OCI-LY7 (cell line): ENCODE measurements at regions of chr3 and their contacts with region 1.

Region 1: DNA sequence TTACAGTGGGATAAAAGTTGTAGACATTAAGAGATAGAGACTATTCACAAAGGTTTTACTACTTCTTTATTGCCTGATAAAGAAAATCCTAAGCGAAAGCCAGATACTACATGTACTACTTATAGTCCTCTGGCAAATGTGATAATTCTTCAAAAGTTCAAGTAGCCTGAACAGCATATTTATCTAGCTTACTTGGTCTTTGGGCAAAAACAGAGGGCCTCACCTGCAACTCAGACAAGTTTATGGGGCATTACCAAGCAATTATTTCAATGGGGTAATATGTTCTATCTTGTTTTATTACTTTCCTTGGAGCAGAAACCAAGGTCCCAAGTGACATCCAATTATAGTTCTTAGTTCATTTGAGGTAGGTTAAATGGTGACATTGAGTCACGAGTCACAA is 390.1 kb upstream of the ARHGEF26 start:
- DNase-seq: no peak
- H3K4me3 ChIP-seq: no peak overlapping the region
- H3K27ac ChIP-seq: no peak overlapping the region
- H3K4me1 ChIP-seq: no peaks in the 10 kb centered on the region
- CTCF ChIP-seq: no peak

Region 2: GRCh38 chr3:153130312-153130990 is 600.6 kb before region 1 on chr3:
- CTCF ChIA-PET with region 1: no interaction called
- POLR2A ChIA-PET with region 1: no interaction called
- intact Hi-C with region 1: no loop called
- DNase-seq: no peak
- H3K4me3 ChIP-seq: no peak overlapping the region
- H3K27ac ChIP-seq: no peak overlapping the region
- H3K4me1 ChIP-seq: no peaks in the 10 kb centered on the region
- CTCF ChIP-seq: no peak

Region 3: GRCh38 chr3:153495422-153495821 is 235.6 kb before region 1 on chr3:
- CTCF ChIA-PET with region 1: no interaction called
- POLR2A ChIA-PET with region 1: no interaction called
- intact Hi-C with region 1: no loop called
- DNase-seq: no peak
- H3K4me3 ChIP-seq: no peak overlapping the region
- H3K27ac ChIP-seq: no peak overlapping the region
- H3K4me1 ChIP-seq: no peaks in the 10 kb centered on the region
- CTCF ChIP-seq: no peak

Region 4: DNA sequence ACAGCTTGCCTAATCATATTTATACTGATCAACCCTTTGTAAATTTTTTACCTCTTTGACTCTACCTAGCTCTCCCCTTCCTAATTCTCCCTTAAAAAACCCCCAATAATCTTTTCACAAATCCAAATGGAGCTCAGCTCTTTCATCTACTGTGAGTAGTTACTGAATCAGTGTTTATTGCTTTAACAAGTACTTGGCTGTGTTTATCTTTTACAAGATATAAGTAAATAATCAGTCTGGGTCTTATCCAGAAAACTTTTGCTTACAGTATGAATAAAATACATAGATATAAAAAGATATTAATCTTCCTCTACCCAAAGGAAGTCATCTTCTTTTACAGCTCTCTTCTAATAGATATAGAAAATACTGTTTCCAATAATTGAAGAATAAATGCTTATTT is 202.6 kb before region 1 on chr3:
- CTCF ChIA-PET with region 1: no interaction called
- POLR2A ChIA-PET with region 1: no interaction called
- intact Hi-C with region 1: no loop called
- DNase-seq: no peak
- H3K4me3 ChIP-seq: no peak overlapping the region
- H3K27ac ChIP-seq: no peak overlapping the region
- H3K4me1 ChIP-seq: no peaks in the 10 kb centered on the region
- CTCF ChIP-seq: no peak

Region 5: GRCh38 chr3:153744889-153745288 is 13.8 kb after region 1 on chr3:
- CTCF ChIA-PET with region 1: no interaction called
- POLR2A ChIA-PET with region 1: interaction called, 16 read pairs
- intact Hi-C with region 1: no loop called
- DNase-seq: no peak
- H3K4me3 ChIP-seq: peak overlapping the region; percentile 62
- H3K27ac ChIP-seq: peak overlapping the region; percentile 78
- H3K4me1 ChIP-seq: peaks cover 75% of the 10 kb centered on the region
- CTCF ChIP-seq: no peak